ENCODE measurements at regions of chr4 and their contacts with region 1.

Region 1: GRCh38 chr4:22463179-22463578 is 52.7 kb downstream of the ADGRA3 start:
- DNase-seq: peak in 1 of 2 experiments; percentile 35
- H3K4me3 ChIP-seq: no peak overlapping the region
- H3K4me3 Mint-ChIP-seq: no peak overlapping the region
- H3K27ac Mint-ChIP-seq: no peak overlapping the region
- H3K4me1 ChIP-seq: peaks cover 34% of the 10 kb centered on the region
- H3K4me1 Mint-ChIP-seq: peaks cover 40% of the 10 kb centered on the region
- H3K27me3 ChIP-seq: no peaks in the 10 kb centered on the region
- H3K27me3 Mint-ChIP-seq: no peaks in the 10 kb centered on the region
- CTCF ChIP-seq: no peak

Region 2: GRCh38 chr4:22434895-22435294 is 28.3 kb before region 1 on chr4:
- CTCF ChIA-PET with region 1: no interaction called
- POLR2A ChIA-PET with region 1: no interaction called
- intact Hi-C with region 1: loop called (anchors 2 kb)
- DNase-seq: peak; percentile 43 to 51
- H3K4me3 ChIP-seq: no peak overlapping the region
- H3K4me3 Mint-ChIP-seq: no peak overlapping the region
- H3K27ac Mint-ChIP-seq: no peak overlapping the region
- H3K4me1 ChIP-seq: peaks cover 8% of the 10 kb centered on the region
- H3K4me1 Mint-ChIP-seq: peaks cover 7% of the 10 kb centered on the region
- H3K27me3 ChIP-seq: no peaks in the 10 kb centered on the region
- H3K27me3 Mint-ChIP-seq: no peaks in the 10 kb centered on the region
- CTCF ChIP-seq: peak; percentile 31 to 37

Region 3: GRCh38 chr4:22474636-22475310 is 11.6 kb after region 1 on chr4:
- CTCF ChIA-PET with region 1: no interaction called
- POLR2A ChIA-PET with region 1: no interaction called
- intact Hi-C with region 1: loop called (anchors 1 kb)
- DNase-seq: no peak
- H3K4me3 ChIP-seq: no peak overlapping the region
- H3K4me3 Mint-ChIP-seq: peak overlapping the region; percentile 37
- H3K27ac Mint-ChIP-seq: peak overlapping the region; percentile 87
- H3K4me1 ChIP-seq: peaks cover 43% of the 10 kb centered on the region
- H3K4me1 Mint-ChIP-seq: peaks cover 32% of the 10 kb centered on the region
- H3K27me3 ChIP-seq: no peaks in the 10 kb centered on the region
- H3K27me3 Mint-ChIP-seq: no peaks in the 10 kb centered on the region
- CTCF ChIP-seq: no peak

Region 4: DNA sequence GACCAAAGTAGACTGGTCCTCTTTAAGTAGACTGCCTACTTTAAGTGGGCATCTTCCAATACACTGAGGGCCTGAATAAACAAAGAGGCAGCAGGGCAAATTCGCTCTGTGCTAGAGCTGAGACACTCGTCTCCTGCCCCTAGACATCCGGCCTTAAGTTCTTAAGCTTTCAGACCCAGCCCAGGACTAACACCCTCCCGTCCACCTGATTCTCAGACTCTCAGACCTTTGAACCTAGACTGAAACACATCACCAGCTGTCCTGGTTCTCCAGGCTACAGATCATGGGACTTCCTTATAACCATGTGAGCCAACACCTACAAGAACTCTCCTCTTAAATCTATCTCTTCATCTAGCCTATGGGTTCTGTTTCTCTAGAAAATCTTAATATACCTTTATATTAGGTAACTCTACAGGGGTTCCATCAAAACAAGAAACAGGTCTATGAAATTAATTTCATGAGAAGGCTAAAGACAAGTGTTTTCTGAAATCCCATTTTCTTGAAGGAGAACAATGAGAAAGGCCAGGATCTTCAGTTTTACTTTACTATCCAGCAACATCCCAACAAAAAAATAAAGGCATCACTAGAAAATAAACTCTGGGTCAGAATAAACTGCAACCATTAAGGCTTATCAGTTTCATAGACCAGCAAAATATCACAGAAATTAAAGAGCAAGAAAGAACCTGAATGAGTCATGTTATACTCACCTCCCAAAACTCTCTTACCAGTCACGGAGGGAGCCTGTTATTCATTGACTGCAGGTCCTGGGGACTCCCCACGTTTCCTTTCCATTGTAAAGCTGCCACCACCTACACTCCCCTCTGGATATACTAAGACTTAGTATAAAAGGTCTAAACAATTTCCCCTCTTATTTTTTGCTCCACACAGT is 37.9 kb after region 1 on chr4:
- CTCF ChIA-PET with region 1: no interaction called
- POLR2A ChIA-PET with region 1: no interaction called
- intact Hi-C with region 1: no loop called
- DNase-seq: no peak
- H3K4me3 ChIP-seq: no peak overlapping the region
- H3K4me3 Mint-ChIP-seq: no peak overlapping the region
- H3K27ac Mint-ChIP-seq: no peak overlapping the region
- H3K4me1 ChIP-seq: peaks cover 30% of the 10 kb centered on the region
- H3K4me1 Mint-ChIP-seq: peaks cover 8% of the 10 kb centered on the region
- H3K27me3 ChIP-seq: no peaks in the 10 kb centered on the region
- H3K27me3 Mint-ChIP-seq: no peaks in the 10 kb centered on the region
- CTCF ChIP-seq: no peak

Region 5: DNA sequence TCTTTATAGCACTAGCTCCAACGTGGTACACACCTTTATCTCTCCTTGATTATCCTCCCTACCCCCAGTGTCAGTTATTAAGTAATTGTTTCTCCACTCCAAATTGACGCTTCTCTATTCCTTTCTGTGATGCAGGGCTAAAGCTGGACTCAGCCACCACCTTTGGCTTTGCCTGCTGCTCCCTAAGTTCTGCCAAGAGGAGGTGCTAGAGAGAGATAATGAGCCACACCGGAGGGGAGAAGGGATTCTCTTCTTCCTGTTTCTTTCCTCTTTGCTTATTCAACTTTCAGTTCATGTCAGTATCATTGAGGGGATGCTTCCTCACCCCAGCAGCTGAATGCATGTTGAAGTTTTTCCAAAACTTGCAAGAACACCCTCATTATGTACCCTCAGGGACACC is 406.1 kb after region 1 on chr4:
- CTCF ChIA-PET with region 1: no interaction called
- POLR2A ChIA-PET with region 1: no interaction called
- intact Hi-C with region 1: no loop called
- DNase-seq: no peak
- H3K4me3 ChIP-seq: no peak overlapping the region
- H3K4me3 Mint-ChIP-seq: no peak overlapping the region
- H3K27ac Mint-ChIP-seq: no peak overlapping the region
- H3K4me1 ChIP-seq: no peaks in the 10 kb centered on the region
- H3K4me1 Mint-ChIP-seq: no peaks in the 10 kb centered on the region
- H3K27me3 ChIP-seq: no peaks in the 10 kb centered on the region
- H3K27me3 Mint-ChIP-seq: peaks cover 1% of the 10 kb centered on the region
- CTCF ChIP-seq: no peak